ENCODE measurements at regions of chr21 and their contacts with region 1.

Region 1: DNA sequence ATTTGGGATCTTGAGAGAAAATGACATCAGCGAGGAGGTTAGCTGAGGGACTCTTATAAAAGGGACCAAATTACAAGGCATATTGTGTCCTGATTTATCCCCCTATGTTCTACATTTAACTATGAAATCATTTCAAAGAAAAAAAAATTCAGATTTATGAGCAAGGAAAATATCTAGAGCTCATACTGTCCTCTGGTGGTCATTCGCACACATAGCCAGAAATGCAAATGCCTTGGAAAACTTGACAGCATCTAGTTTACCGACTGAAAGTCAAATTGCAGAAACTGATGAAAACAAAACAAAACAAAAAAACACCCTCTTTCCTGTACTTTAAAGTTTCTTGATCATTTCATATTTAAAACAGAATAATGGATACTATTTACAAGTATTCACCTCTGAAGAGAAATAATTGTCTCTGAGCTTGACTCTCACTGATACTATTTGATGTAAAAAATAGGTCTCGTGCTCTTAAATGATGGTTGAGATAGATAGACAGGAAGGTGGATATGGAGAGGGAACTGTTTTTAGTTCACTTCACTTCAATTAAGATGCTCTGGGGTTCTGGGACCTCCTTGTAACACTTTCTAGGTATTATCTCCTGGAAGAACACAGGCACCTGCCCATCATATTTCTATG is 253.8 kb downstream of the PCP4 start:
- DNase-seq: peak in 2 of 4 donors; percentile 18
- ATAC-seq: no peak
- H3K4me3 ChIP-seq: no peak overlapping the region
- H3K27ac ChIP-seq: no peak overlapping the region
- H3K4me1 ChIP-seq: no peaks in the 10 kb centered on the region
- H3K27me3 ChIP-seq: no peaks in the 10 kb centered on the region
- CTCF ChIP-seq: peak; percentile 51 to 92 (median 86)
- POLR2A ChIP-seq: no peak

Region 2: GRCh38 chr21:39788383-39788782 is 332.7 kb before region 1 on chr21:
- intact Hi-C with region 1: loop called (anchors 10 kb)
- DNase-seq: peak; percentile 79 to 87 (median 81)
- ATAC-seq: peak; percentile 99
- H3K4me3 ChIP-seq: no peak overlapping the region
- H3K27ac ChIP-seq: peak overlapping the region in 3 of 4 donors; percentile 11 to 64 (median 53)
- H3K4me1 ChIP-seq: peaks cover 10% of the 10 kb centered on the region
- H3K27me3 ChIP-seq: no peaks in the 10 kb centered on the region
- CTCF ChIP-seq: peak; percentile 53 to 97 (median 89)
- POLR2A ChIP-seq: no peak

Region 3: GRCh38 chr21:39867198-39867650 is 253.8 kb before region 1 on chr21 and contains the start of gene PCP4:
- intact Hi-C with region 1: loop called (anchors 10 kb)
- DNase-seq: peak; percentile 58 to 71 (median 65)
- ATAC-seq: peak; percentile 55
- H3K4me3 ChIP-seq: no peak within 1 kb of the TSS
- H3K27ac ChIP-seq: no peak within 1 kb of the TSS
- H3K4me1 ChIP-seq: no peaks in the 10 kb centered on the region
- H3K27me3 ChIP-seq: no peaks in the 10 kb centered on the region
- CTCF ChIP-seq: peak; percentile 56 to 82 (median 74)
- POLR2A ChIP-seq: no peak
- total RNA-seq, gene PCP4: 1.6 TPM in 1 of 2 donors, not detected in the other

Region 4: GRCh38 chr21:40067751-40068150 is 53.3 kb before region 1 on chr21:
- intact Hi-C with region 1: no loop called
- DNase-seq: no peak
- ATAC-seq: no peak
- H3K4me3 ChIP-seq: no peak overlapping the region
- H3K27ac ChIP-seq: no peak overlapping the region
- H3K4me1 ChIP-seq: no peaks in the 10 kb centered on the region
- H3K27me3 ChIP-seq: peaks cover 0 to 4% of the 10 kb centered on the region in 2 donors
- CTCF ChIP-seq: no peak
- POLR2A ChIP-seq: no peak

Measured in body of pancreas (tissue), 4 donors.